ENCODE measurements at regions of chr4 and their contacts with region 1.

Region 1: DNA sequence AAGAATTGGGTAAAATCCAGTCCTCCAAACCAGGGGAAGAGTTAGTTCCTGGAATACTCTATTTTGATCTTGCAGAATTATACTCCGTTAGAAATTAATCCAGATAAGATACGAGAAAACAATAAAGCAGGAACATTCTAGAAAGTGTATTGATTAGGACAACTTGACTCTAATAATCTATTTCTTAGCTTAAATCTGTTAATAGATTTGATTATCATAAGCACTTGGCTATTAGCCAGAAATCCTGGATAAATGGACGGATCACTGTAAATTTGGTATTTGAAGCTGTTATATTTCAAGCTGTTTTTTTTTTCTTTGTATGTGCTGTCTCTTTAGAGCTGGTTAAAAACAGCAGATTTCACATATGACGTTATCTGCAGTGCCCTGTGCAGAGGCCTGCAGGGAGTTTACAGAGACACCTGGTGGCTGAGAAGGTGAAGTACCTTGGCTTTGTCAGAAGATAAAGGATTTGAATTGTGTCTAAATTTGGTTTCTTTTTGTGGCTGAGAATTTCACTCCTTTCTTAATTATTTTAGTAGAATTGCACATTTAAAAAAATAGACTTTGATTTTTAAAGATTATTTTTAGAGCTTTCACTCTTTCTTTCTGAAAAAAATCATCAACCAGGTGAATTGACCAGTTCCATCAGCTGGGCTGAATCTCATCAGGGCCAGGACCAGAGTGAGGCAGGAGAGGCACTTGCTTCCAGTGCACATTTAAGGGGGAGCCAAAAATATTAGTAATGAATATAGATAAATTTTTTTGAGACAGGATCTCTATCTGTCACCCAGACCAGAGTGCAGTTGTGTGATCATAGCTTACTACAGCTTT is 9.7 kb upstream of the CHRNA9 start:
- DNase-seq: peak; percentile 83
- CTCF ChIP-seq: peak; percentile 77

Region 2: DNA sequence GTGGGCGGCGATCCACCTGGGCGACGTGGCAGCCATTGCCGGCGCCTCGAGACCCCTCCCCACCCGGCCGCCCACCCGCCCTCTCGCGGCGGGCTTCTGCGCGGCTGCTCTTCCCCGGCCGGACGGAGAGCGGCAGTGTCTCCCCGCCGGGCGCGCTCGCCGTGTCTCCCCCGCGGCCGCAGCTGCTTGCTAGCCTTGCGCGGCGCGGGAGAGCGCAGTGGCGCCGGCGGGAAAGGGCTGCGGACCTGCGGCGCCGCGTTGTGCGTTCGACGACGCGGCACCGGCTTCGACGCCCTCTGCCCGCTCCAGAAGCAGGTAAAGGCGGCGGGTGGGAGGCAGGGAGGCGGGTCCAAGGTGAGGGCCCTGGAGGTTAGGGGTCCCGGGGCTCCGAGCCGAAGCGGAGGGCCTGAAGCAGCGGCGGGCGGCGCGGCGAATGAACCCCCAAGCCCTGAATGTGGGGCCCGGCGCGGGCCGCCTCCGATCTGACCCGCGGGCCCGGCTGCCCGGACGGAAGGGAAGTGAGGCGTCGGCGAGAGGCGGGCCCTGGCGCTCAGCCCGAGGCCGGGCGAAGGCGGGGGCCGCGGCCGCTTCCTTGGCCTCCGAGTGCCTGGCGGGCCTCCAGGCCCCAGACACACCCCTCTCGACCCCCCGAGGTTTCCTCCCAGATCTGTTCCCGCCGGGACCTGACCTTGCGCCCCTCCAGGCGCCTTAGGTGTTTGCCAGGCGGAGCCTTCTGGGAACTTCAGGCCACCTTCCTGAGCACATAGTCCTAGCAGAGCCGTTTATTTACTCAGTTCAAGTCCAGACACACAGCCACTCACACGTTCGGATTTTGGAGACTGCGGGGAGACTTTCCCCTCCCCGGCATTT is 268.5 kb before region 1 on chr4 and contains the start of gene N4BP2:
- CTCF ChIA-PET with region 1: interaction called, 11 read pairs
- POLR2A ChIA-PET with region 1: no interaction called
- DNase-seq: peak; percentile 82
- CTCF ChIP-seq: peak; percentile 84

Region 3: GRCh38 chr4:40149960-40150385 is 175.4 kb before region 1 on chr4:
- CTCF ChIA-PET with region 1: interaction called, 15 read pairs
- POLR2A ChIA-PET with region 1: no interaction called
- DNase-seq: peak; percentile 66
- CTCF ChIP-seq: peak; percentile 82

Region 4: GRCh38 chr4:40283968-40284367 is 41.4 kb before region 1 on chr4:
- CTCF ChIA-PET with region 1: no interaction called
- POLR2A ChIA-PET with region 1: no interaction called
- DNase-seq: peak; percentile 58
- CTCF ChIP-seq: no peak

Measured in GM10248 (cell line).